Breast epithelium (tissue), 4 donors: ENCODE measurements at regions of chr1 and their contacts with region 1.

Region 1: GRCh38 chr1:30120245-30121000 is 603.0 kb downstream of the MATN1 start:
- DNase-seq: no peak
- H3K4me3 ChIP-seq: no peak overlapping the region
- H3K27ac ChIP-seq: no peak overlapping the region
- H3K4me1 ChIP-seq: no peaks in the 10 kb centered on the region
- H3K27me3 ChIP-seq: no peaks in the 10 kb centered on the region
- CTCF ChIP-seq: no peak
- POLR2A ChIP-seq: no peak

Region 2: GRCh38 chr1:29379443-29380073 is 740.9 kb before region 1 on chr1:
- intact Hi-C with region 1: loop called (anchors 5 kb)
- DNase-seq: no peak
- H3K4me3 ChIP-seq: no peak overlapping the region
- H3K27ac ChIP-seq: no peak overlapping the region
- H3K4me1 ChIP-seq: no peaks in the 10 kb centered on the region
- H3K27me3 ChIP-seq: no peaks in the 10 kb centered on the region
- CTCF ChIP-seq: no peak
- POLR2A ChIP-seq: no peak